Right ventricle myocardium superior (tissue), 1 donor: ENCODE measurements at regions of chr9 and their contacts with region 1.

Region 1: DNA sequence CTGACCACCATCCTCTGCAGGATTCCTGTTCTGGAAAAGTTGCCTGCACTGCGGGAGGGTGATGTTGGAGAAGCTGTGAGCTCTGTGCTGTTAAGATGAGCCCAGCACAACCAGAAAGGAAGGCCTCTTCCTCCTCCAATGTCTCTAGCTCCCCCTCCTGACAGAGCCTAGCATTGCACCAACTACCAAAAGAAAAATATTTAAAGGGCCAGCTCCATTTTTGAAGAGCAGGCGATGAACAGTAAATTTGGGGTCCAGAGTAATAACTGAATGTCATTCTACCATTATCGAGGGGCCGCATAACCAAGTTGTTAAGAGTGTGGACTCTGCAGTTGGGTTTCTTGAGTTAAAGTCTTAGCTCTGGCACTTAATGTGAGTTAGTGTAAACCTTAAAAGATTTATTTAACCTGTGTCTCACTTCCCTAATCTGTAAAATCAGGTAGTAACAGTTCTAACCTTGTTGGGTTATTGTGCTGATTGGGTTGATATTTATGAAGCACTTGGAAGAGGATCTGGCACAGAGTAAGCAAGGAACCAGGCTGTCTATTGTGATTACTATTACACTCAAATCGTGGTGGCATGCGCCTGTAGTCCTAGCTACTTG is 3.9 kb downstream of the TEX53 start:
- DNase-seq: no peak
- ATAC-seq: peak; percentile 85

Region 2: GRCh38 chr9:114405294-114406034 is 248.2 kb before region 1 on chr9:
- intact Hi-C with region 1: loop called (anchors 2 kb)
- DNase-seq: peak; percentile 74
- ATAC-seq: peak; percentile 96

Region 3: DNA sequence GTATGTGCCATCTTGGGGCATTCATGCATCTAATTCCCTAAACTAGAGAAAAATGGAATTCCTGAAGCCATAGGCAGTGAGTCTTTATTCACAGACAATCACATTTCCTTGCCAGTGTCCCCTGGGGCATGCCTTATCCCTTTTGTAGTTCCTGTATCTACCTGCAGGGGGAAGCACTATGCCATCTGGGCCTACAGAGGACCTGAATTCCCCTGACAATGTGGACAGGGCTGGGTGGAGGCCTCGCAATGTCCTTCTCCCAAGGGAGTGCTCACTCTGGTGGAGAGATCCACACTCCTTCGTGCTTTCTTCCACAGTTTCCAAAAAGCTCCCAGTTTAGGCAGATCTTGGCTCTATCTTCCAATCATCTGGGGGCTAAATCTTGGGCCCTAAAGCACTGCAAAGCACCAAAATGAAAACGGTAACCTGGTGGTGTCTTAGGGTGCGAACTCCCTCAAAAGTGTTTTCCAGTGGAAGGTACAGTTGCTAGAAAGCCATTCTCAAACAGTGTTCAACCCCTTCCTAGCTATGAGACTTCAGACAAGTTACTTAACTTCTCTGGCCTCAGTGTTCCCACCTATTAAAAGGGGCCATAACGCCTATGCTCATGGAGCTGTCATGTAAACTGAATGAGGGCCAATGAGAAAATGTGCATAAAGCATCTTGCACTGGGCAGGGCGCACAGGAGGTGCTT is 165.9 kb before region 1 on chr9:
- intact Hi-C with region 1: loop called (anchors 5 kb)
- DNase-seq: no peak
- ATAC-seq: peak; percentile 80